ENCODE measurements at regions of chr15 and their contacts with region 1.

Region 1: GRCh38 chr15:50051803-50052419 is 67.1 kb downstream of the ATP8B4 start:
- DNase-seq: no peak
- H3K4me3 ChIP-seq: no peak overlapping the region
- H3K27ac ChIP-seq: peak overlapping the region in 3 of 4 donors; percentile 32 to 37 (median 35)
- H3K4me1 ChIP-seq: peaks cover 3 to 42% (median 29%) of the 10 kb centered on the region in 4 donors
- H3K27me3 ChIP-seq: no peaks in the 10 kb centered on the region
- CTCF ChIP-seq: peak; percentile 68 to 74 (median 70)
- EP300 ChIP-seq: no peak
- POLR2A ChIP-seq: no peak

Region 2: DNA sequence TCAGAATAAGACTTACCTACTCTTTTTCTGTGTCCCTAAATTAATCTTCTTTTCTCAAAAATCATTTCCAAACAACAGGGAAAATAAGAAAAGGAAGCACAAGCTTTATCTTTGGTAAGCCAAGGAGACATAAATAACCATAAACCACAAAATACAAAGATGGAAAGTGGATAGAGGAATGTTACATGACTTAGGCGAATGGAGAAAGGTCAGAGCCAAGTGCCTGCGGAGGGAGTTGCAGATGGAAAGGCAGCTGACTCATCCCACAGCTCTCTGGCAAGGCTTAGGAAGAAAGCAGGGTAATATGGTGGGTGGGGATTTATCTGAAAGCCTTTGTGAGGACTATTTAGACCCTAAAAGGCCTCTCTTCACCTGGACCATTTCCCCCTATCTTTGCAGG is 809.1 kb before region 1 on chr15:
- intact Hi-C with region 1: loop called (anchors 5 kb)
- DNase-seq: no peak
- H3K4me3 ChIP-seq: no peak overlapping the region
- H3K27ac ChIP-seq: no peak overlapping the region
- H3K4me1 ChIP-seq: peaks cover 11 to 73% (median 68%) of the 10 kb centered on the region in 4 donors
- H3K27me3 ChIP-seq: no peaks in the 10 kb centered on the region
- CTCF ChIP-seq: no peak
- EP300 ChIP-seq: no peak
- POLR2A ChIP-seq: no peak

Region 3: GRCh38 chr15:49620658-49621368 is 431.1 kb before region 1 on chr15 and contains the starts of genes DTWD1 and FAM227B:
- intact Hi-C with region 1: loop called (anchors 5 kb)
- DNase-seq: peak; percentile 98
- H3K4me3 ChIP-seq: peak within 1 kb of the TSS; percentile 73 to 80 (median 75)
- H3K27ac ChIP-seq: peak within 1 kb of the TSS; percentile 87 to 91 (median 88)
- H3K4me1 ChIP-seq: peaks cover 11 to 46% (median 36%) of the 10 kb centered on the region in 4 donors
- H3K27me3 ChIP-seq: no peaks in the 10 kb centered on the region
- CTCF ChIP-seq: peak in 2 of 3 experiments; percentile 9 to 23
- EP300 ChIP-seq: no peak
- POLR2A ChIP-seq: peak; percentile 93
- total RNA-seq, gene DTWD1: 21.0 to 35.3 (median 27.8) TPM
- total RNA-seq, gene FAM227B: 5.8 to 13.7 (median 10.3) TPM

Region 4: DNA sequence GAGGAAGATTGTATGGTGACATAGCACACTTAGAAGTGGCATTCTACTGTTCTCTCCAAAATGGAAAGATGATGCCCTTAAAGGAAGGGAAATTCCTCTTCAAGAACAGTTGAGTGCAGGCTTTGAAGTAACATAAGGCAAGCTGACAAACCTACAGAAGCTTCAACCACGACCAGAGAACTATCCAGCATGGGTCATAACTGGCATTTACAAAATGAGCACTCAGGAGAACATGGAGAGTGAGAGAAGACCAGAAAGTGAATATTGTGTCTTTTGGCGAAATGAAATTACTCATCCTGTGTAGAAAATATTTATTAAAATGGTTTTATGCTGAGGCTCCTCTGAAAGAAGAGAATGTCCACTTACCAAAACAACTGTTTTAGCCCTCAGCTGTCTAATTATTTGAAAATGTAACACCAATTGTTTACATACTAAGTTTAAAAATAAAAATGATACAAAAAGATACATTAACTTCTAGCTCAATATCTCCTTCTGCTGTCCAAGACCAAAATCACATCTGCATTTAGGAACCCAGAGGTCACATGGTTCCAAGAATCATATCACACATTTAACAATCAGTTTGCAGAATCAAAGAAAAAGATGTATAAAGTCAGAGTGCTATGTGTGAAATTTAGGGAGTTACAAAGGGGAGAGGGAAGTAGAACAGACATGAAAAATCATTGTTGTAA is 149.8 kb before region 1 on chr15:
- intact Hi-C with region 1: loop called (anchors 10 kb)
- DNase-seq: no peak
- H3K4me3 ChIP-seq: peak overlapping the region in 3 of 4 donors; percentile 0 to 17 (median 0)
- H3K27ac ChIP-seq: peak overlapping the region; percentile 67 to 78 (median 70)
- H3K4me1 ChIP-seq: peaks cover 17 to 58% (median 49%) of the 10 kb centered on the region in 4 donors
- H3K27me3 ChIP-seq: no peaks in the 10 kb centered on the region
- CTCF ChIP-seq: peak in 1 of 3 experiments; percentile 29
- EP300 ChIP-seq: no peak
- POLR2A ChIP-seq: no peak

Region 5: GRCh38 chr15:49990835-49991545 is 60.9 kb before region 1 on chr15:
- intact Hi-C with region 1: no loop called
- DNase-seq: no peak
- H3K4me3 ChIP-seq: no peak overlapping the region
- H3K27ac ChIP-seq: peak overlapping the region; percentile 28 to 60 (median 40)
- H3K4me1 ChIP-seq: peaks cover 24 to 94% (median 71%) of the 10 kb centered on the region in 4 donors
- H3K27me3 ChIP-seq: no peaks in the 10 kb centered on the region
- CTCF ChIP-seq: no peak
- EP300 ChIP-seq: no peak
- POLR2A ChIP-seq: no peak

Region 6: GRCh38 chr15:50134520-50135024 is 82.7 kb after region 1 on chr15:
- intact Hi-C with region 1: loop called (anchors 5 kb)
- DNase-seq: no peak
- H3K4me3 ChIP-seq: no peak overlapping the region
- H3K27ac ChIP-seq: peak overlapping the region in 3 of 4 donors; percentile 67 to 83 (median 71)
- H3K4me1 ChIP-seq: peaks cover 0 to 27% (median 19%) of the 10 kb centered on the region in 4 donors
- H3K27me3 ChIP-seq: no peaks in the 10 kb centered on the region
- CTCF ChIP-seq: no peak
- EP300 ChIP-seq: no peak
- POLR2A ChIP-seq: no peak

Region 7: DNA sequence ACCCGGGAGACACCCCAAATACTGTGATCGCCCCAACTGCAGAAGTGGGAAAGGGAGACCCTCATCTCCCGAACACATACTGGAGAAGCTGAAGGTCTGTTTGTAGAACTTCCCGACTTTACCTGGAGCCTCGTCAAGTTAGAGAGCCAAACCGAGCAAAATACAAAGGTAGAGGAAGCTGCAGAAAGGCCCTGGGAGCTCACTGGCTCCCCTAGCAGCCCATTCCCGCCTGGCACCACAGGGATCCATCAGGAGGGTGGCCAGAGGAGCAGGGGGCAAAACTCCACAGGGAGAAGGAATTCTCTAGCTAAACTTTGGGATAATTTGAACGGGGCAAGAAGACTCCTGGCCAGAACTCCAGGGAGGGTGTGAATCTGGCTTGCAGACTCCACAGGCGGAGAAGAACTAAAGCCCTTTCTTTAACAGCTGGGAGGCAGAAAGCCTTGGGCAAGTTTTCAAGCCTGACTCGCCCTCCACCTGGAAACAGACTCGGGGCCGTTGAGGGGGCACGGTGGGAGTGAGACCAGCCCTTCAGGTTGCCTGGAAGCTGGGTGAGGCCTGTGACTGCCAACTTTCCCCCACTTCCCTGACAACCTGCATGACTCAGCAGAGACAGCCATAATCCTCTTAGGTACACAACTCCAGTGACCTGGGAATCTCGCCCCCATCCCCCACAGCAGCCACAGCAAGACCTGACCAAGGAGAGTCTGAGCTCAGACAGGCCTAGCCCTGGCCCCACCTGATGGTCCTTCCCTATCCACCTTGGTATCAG is 158.6 kb after region 1 on chr15:
- intact Hi-C with region 1: no loop called
- DNase-seq: no peak
- H3K4me3 ChIP-seq: no peak overlapping the region
- H3K27ac ChIP-seq: no peak overlapping the region
- H3K4me1 ChIP-seq: no peaks in the 10 kb centered on the region
- H3K27me3 ChIP-seq: no peaks in the 10 kb centered on the region
- CTCF ChIP-seq: no peak
- EP300 ChIP-seq: no peak
- POLR2A ChIP-seq: no peak

Measured in esophagus muscularis mucosa (tissue), 4 donors.